B cell (primary cell): ENCODE measurements at regions of chr22 and their contacts with region 1.

Region 1: DNA sequence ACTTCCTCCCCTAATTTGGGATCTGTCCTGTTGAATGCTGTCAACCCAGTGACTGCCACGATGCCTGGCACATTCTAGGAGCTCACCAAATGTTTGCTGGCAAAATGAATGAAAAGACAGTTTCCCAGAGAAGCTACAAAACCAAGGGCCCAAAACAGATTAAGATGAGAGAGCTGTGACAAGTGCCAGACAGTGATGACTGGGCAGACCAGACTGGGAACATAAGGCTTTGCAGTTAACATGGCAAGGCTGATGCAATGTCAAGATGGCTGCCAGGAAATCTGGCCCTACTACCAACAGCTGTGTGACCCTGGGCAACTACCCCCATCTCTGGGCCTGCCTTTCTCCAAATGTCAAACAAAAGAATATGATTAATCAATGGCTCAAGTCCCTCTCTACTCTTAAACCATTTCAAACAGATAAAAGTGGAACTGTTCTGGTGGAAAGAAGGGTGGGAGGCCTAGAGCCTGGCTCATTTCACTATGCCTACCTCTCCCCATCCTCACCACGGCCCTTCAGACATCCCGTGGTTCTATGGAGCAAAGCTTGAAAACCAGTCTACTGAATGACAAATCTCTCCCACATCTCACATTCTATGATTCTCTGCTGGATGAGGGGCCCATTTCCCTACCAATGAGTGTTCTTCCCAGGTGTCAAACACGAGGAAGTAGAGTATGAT is 12.8 kb downstream of the AP1B1 start:
- DNase-seq: no peak
- ATAC-seq: no peak
- H3K4me3 ChIP-seq: no peak overlapping the region
- H3K4me3 Mint-ChIP-seq: no peak overlapping the region
- H3K27ac ChIP-seq: peak overlapping the region in 1 of 2 donors; percentile 45
- H3K27ac Mint-ChIP-seq: peak overlapping the region; percentile 76
- H3K4me1 ChIP-seq: peaks cover 32 to 33% of the 10 kb centered on the region in 2 donors
- H3K4me1 Mint-ChIP-seq: peaks cover 72% of the 10 kb centered on the region
- H3K27me3 ChIP-seq: no peaks in the 10 kb centered on the region
- H3K27me3 Mint-ChIP-seq: no peaks in the 10 kb centered on the region
- CTCF ChIP-seq: no peak

Region 2: DNA sequence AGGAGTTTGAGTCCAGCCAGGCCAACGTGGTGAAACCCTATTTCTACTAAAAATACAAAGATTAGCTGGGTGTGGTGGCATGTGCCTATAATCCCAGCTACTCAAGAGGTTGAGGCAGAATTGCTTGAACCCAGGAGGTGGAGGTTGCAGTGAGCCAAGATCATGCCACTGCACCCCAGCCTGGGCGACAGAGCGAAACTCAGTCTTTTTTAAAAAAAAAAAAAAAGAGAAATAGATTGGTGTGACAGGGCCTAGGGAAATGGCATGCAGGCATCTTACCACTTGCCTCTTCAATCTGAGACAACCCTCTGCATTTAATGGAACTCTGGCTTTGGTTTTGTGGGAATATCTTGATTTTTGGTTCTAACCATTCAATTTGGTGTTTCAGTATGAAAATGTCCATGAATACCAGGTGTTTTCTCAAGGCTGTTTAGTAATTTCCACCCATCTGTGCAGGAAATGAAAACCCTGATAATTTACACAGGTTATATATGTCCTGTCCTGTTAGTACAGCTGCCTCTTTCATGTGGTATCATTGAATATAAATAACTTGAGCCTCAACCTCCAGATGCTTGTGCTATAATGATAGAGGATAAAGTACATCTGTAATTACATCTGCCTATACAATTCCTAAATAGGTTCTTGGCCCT is 583.6 kb before region 1 on chr22:
- CTCF ChIA-PET with region 1: no interaction called
- POLR2A ChIA-PET with region 1: interaction called, 18 read pairs
- intact Hi-C with region 1: no loop called
- DNase-seq: peak; percentile 28
- ATAC-seq: peak; percentile 67
- H3K4me3 ChIP-seq: no peak overlapping the region
- H3K4me3 Mint-ChIP-seq: peak overlapping the region; percentile 40
- H3K27ac ChIP-seq: peak overlapping the region; percentile 32 to 66
- H3K27ac Mint-ChIP-seq: peak overlapping the region; percentile 69
- H3K4me1 ChIP-seq: peaks cover 28 to 32% of the 10 kb centered on the region in 2 donors
- H3K4me1 Mint-ChIP-seq: peaks cover 63% of the 10 kb centered on the region
- H3K27me3 ChIP-seq: no peaks in the 10 kb centered on the region
- H3K27me3 Mint-ChIP-seq: no peaks in the 10 kb centered on the region
- CTCF ChIP-seq: no peak

Region 3: DNA sequence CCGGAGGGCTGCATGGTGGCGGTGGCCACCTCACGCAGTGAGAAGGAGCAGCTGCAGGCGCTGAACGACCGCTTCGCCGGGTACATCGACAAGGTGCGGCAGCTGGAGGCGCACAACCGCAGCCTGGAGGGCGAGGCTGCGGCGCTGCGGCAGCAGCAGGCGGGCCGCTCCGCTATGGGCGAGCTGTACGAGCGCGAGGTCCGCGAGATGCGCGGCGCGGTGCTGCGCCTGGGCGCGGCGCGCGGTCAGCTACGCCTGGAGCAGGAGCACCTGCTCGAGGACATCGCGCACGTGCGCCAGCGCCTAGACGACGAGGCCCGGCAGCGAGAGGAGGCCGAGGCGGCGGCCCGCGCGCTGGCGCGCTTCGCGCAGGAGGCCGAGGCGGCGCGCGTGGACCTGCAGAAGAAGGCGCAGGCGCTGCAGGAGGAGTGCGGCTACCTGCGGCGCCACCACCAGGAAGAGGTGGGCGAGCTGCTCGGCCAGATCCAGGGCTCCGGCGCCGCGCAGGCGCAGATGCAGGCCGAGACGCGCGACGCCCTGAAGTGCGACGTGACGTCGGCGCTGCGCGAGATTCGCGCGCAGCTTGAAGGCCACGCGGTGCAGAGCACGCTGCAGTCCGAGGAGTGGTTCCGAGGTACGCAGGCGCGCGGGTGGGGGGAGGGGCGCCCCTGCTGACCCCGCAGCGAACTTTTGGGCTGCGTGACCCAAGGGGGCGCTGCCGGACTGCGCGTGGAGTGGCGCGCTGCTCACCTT is 105.2 kb after region 1 on chr22:
- CTCF ChIA-PET with region 1: no interaction called
- POLR2A ChIA-PET with region 1: no interaction called
- intact Hi-C with region 1: no loop called
- DNase-seq: peak; percentile 61
- ATAC-seq: no peak
- H3K4me3 ChIP-seq: peak overlapping the region in 2 of 5 experiments; percentile 8 to 24
- H3K4me3 Mint-ChIP-seq: peak overlapping the region; percentile 79
- H3K27ac ChIP-seq: no peak overlapping the region
- H3K27ac Mint-ChIP-seq: no peak overlapping the region
- H3K4me1 ChIP-seq: peaks cover 30 to 38% of the 10 kb centered on the region in 2 donors
- H3K4me1 Mint-ChIP-seq: peaks cover 38% of the 10 kb centered on the region
- H3K27me3 ChIP-seq: peaks cover 0 to 64% (median 43%) of the 10 kb centered on the region in 4 experiments
- H3K27me3 Mint-ChIP-seq: peaks cover 35% of the 10 kb centered on the region
- CTCF ChIP-seq: no peak